Activated CD8-positive, alpha-beta T cell treated with anti-CD3 and anti-CD28 coated beads, Interleukin-2, amount 10 ng/mL, durations not matched to agents 7 days and 5 days (primary cell): ENCODE measurements at regions of chr14 and their contacts with region 1.

Region 1: GRCh38 chr14:22570132-22570949 is 18.7 kb downstream of the DAD1 start:
- DNase-seq: peak; percentile 94
- ATAC-seq: peak; percentile 87
- H3K4me3 Mint-ChIP-seq: peak overlapping the region; percentile 80
- H3K27ac Mint-ChIP-seq: peak overlapping the region; percentile 92
- H3K4me1 Mint-ChIP-seq: peaks cover 62% of the 10 kb centered on the region
- H3K27me3 Mint-ChIP-seq: no peaks in the 10 kb centered on the region

Region 2: DNA sequence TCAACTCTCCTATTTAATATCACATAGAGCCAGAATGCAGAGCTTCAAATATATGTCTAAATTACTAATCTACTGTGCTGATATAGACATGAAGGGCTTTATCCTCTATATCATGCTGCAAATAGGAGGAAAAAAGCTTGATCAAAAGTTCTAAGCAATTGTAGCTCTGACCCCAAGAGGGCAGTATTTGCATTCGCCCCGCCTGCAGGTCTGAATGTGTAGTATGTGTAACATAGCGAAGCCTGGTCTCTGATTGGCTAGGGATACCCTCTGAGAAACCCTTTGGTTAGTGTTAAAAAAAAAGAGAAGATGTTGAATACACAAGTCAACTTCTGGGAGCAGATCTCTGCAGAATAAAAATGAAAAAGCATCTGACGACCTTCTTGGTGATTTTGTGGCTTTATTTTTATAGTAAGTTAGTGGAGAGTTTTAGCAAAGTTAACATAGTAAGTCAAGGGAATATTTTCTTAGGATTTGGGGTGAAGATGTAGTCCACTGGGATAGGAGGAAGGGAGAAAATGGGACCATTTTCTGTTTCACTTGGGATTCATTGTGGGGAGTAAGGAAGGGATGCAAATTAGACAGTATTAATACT is 745.1 kb before region 1 on chr14:
- CTCF ChIA-PET with region 1: interaction called, 12 read pairs
- POLR2A ChIA-PET with region 1: no interaction called
- DNase-seq: peak; percentile 62
- ATAC-seq: peak; percentile 95
- H3K4me3 Mint-ChIP-seq: peak overlapping the region; percentile 35
- H3K27ac Mint-ChIP-seq: no peak overlapping the region
- H3K4me1 Mint-ChIP-seq: peaks cover 4% of the 10 kb centered on the region
- H3K27me3 Mint-ChIP-seq: peaks cover 35% of the 10 kb centered on the region

Region 3: DNA sequence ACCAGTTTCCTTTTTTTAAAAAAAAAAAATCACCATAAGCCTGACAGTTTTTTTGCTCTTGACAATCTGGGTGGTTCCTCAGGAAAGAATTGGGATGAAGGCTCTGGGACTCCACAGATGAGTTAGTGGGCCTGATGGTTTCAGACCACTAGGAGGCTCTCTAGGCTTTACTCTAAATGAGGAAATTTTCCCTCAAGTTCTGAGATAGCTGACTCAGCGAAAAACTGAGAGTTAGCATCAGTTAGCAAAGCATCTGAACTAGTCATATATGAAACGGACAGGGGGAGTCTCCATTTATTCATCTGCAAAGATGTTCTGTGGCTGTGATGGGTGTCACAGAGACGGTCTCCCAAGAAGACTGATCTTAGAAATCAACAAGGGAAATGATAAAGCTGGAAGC is 582.4 kb before region 1 on chr14:
- CTCF ChIA-PET with region 1: interaction called, 46 read pairs
- POLR2A ChIA-PET with region 1: interaction called, 3 read pairs
- DNase-seq: peak; percentile 35
- ATAC-seq: peak; percentile 39
- H3K4me3 Mint-ChIP-seq: no peak overlapping the region
- H3K27ac Mint-ChIP-seq: peak overlapping the region; percentile 66
- H3K4me1 Mint-ChIP-seq: peaks cover 32% of the 10 kb centered on the region
- H3K27me3 Mint-ChIP-seq: peaks cover 4% of the 10 kb centered on the region

Region 4: GRCh38 chr14:22221508-22221907 is 348.8 kb before region 1 on chr14:
- CTCF ChIA-PET with region 1: interaction called, 10 read pairs
- POLR2A ChIA-PET with region 1: no interaction called
- DNase-seq: no peak
- ATAC-seq: no peak
- H3K4me3 Mint-ChIP-seq: peak overlapping the region; percentile 58
- H3K27ac Mint-ChIP-seq: no peak overlapping the region
- H3K4me1 Mint-ChIP-seq: peaks cover 13% of the 10 kb centered on the region
- H3K27me3 Mint-ChIP-seq: no peaks in the 10 kb centered on the region

Region 5: GRCh38 chr14:22531451-22532344 is 38.6 kb before region 1 on chr14:
- CTCF ChIA-PET with region 1: interaction called, 33 read pairs
- POLR2A ChIA-PET with region 1: interaction called, 232 read pairs
- DNase-seq: peak; percentile 49
- ATAC-seq: peak; percentile 40
- H3K4me3 Mint-ChIP-seq: peak overlapping the region; percentile 76
- H3K27ac Mint-ChIP-seq: peak overlapping the region; percentile 92
- H3K4me1 Mint-ChIP-seq: peaks cover 89% of the 10 kb centered on the region
- H3K27me3 Mint-ChIP-seq: no peaks in the 10 kb centered on the region

Region 6: GRCh38 chr14:22653012-22653621 is 82.8 kb after region 1 on chr14:
- CTCF ChIA-PET with region 1: interaction called, 59 read pairs
- POLR2A ChIA-PET with region 1: interaction called, 5 read pairs
- DNase-seq: peak; percentile 63
- ATAC-seq: peak; percentile 87
- H3K4me3 Mint-ChIP-seq: no peak overlapping the region
- H3K27ac Mint-ChIP-seq: no peak overlapping the region
- H3K4me1 Mint-ChIP-seq: peaks cover 18% of the 10 kb centered on the region
- H3K27me3 Mint-ChIP-seq: peaks cover 2% of the 10 kb centered on the region

Region 7: GRCh38 chr14:22872033-22872832 is 301.9 kb after region 1 on chr14:
- CTCF ChIA-PET with region 1: interaction called, 26 read pairs
- POLR2A ChIA-PET with region 1: no interaction called
- DNase-seq: peak; percentile 78
- ATAC-seq: peak; percentile 52
- H3K4me3 Mint-ChIP-seq: peak overlapping the region; percentile 84
- H3K27ac Mint-ChIP-seq: peak overlapping the region; percentile 97
- H3K4me1 Mint-ChIP-seq: peaks cover 24% of the 10 kb centered on the region
- H3K27me3 Mint-ChIP-seq: no peaks in the 10 kb centered on the region